Cardiac septum (tissue), 1 donor: ENCODE measurements at regions of chr13 and their contacts with region 1.

Region 1: DNA sequence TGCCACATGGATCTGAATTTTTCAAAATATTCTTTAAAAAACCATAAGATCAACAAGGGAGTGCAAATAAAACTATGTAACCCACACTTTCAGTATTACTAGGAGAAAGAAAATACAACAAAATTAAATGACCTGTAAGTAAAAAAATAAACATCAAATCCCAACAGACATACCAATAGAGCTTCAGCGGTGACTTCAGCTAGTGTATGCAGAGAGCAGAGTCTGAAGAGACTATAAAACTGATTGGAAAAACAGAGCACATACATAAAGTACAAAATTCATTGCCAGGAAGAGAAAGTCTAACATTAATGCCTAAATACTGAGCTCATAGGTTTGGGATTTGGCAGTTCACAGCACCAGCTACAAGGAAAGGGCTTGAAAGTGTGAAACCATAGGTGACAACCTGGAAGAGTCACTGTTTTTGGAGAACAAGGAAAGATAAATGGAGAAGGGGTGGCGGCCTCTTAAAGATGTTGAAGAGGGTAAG is 291.1 kb downstream of the LMO7 start:
- DNase-seq: no peak

Region 2: DNA sequence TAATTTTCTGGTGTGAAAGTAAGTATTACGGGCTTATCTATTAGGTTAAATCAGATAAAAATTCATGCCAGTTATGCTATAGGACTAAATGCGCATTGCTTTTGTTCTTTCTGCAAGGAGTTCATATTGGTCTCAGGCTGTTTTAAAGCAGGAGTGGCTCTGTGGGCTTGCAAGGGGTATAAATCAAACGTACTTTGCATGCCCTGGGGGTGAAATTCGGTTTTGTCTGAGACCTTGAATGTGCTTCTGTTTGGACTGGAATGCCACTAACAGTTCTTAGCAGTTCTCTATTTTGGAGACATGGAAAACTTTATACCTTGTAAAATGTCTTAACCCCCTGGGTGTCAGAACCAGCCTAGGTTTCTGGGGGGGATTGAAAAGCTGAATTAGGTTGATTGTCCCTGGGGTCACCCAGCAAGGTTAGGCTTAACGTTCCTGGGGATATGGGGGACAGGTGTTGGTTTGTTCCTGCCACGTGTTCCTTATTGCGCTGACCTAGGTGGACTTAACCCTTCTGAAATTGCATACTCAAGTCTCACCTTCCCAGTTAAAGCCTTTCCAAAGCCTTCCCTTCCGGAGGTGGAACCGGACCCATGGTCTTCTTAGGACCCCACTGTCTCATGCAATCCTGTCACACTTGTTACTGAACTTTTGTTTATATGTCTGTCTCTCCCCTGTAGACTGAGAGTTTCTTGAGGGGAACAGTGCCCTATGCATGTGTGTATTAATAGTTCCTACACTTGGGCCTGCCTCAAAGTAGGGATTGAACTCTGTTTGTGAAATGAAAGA is 108.9 kb before region 1 on chr13:
- intact Hi-C with region 1: no loop called
- DNase-seq: no peak

Region 3: DNA sequence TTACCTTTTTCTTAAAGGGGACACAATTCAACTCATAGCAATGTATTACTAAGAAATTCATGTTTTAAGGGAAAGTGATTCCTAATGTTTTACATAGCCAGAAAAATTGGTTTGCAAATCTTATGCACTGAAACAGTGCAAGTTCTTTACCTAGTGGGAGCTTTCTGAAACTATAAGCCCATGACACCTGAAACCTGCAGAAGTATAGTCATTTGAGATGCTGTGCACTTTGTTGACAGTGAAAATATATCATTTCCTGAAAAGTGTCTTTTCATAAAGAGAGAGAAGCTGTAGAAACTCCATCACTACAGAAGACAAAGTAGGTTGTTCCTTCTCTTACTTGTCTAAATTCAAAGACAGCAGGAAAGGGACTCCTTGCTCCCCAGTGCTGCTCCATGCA is 226.0 kb after region 1 on chr13:
- intact Hi-C with region 1: loop called (anchors 10 kb)
- DNase-seq: no peak